Activated CD4-positive, alpha-beta T cell treated with anti-CD3 and anti-CD28 coated beads, Interleukin-2, amount 10 ng/mL, durations not matched to agents 24 days and 14 days (primary cell): ENCODE measurements at regions of chr6 and their contacts with region 1.

Region 1: DNA sequence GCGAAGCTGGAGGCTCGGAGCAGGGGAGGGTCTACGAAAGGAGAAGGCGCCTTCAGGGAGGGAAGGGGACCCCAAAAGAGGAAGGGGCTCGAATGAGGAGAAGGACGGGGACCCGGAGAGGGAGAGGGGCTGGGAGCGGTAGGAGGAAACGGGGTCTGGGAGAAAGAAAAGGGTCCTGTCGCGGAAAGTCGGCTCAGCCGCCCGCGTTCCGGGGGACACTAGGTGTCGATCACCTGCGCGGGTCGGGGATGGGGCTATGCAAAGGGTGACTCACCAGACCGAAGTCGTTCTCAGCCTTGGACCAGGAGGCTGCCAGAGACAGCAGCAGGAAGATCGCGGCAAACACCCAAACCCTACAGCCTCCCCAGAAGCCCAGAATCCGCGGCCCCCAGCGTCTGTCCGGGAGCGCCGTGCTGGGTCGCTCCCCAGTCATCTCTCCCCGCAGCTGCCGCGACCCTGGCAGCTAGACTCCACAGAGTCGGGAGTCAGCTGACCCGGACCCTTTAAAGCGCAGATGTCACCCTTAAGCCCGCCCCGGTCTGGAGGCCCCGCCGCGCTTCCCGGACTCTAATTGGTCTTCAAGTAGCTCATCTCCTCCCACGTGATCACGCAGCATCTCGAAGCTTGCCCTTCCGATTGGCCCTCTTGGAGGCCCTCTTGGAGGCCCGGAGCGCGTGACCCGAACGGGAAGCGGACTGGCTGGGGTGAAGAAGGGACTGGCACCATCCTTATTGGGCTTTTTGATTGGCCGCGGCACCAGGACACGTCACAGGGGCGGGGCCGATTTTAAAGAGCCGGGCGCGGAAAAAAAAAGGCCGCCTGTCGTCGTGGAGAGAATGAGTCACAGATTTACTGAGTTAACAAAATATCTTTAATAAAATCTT is at the start of gene NEU1:
- DNase-seq: peak; percentile 100
- H3K4me3 Mint-ChIP-seq: peak within 1 kb of the TSS; percentile 93
- H3K27ac Mint-ChIP-seq: peak within 1 kb of the TSS; percentile 91
- H3K4me1 Mint-ChIP-seq: peaks cover 21% of the 10 kb centered on the region
- H3K27me3 Mint-ChIP-seq: peaks cover 3% of the 10 kb centered on the region
- total RNA-seq, gene NEU1: 20.4 and 22.2 TPM in 2 replicates

Region 2: DNA sequence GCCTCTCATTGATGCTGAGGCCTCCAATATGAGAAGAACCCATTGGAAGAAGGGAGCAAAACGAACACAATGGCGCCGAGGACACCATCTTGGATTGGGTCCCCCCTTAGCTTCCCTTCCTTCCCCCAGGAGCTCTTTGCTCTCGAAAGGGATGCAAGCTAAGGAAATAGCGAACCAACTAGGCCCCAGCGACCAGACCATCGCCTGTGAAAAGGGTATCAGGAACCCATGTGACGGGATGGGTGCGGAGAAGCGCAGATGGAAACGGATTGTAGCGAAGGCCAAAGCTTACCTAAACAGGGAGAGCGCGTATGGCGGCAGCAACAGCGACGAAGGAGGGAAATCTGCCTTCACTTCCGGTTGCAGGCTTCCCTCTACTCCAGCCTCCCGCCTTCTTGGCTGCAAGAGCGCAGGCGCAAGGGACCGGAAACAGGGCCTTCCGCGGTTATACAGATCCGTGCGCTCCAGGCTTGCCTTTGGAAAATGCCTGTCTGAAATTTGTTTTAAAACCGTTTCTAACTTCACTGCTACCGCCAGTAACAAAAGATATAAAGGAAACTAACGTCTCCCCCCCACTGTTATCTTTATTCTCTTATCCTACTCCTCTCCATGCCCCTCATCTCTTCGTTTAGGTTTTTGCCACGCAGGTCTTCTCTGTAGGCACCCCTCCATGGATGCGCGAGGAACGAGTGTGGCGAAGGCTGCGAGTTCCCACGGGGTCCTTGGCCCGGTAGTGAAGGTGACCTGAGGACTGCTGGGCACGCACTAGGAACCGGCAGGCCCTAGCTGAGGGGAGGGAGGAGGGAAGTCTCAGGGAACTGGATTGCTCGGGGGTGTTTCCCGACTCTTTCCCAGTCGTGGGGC is 320.7 kb before region 1 on chr6 and contains the start of gene DDX39B:
- intact Hi-C with region 1: loop called (anchors 10 kb)
- DNase-seq: peak; percentile 98
- H3K4me3 Mint-ChIP-seq: peak within 1 kb of the TSS; percentile 81
- H3K27ac Mint-ChIP-seq: peak within 1 kb of the TSS; percentile 90
- H3K4me1 Mint-ChIP-seq: peaks cover 50% of the 10 kb centered on the region
- H3K27me3 Mint-ChIP-seq: no peaks in the 10 kb centered on the region
- total RNA-seq, gene DDX39B: 696 and 720 TPM in 2 replicates

Region 3: DNA sequence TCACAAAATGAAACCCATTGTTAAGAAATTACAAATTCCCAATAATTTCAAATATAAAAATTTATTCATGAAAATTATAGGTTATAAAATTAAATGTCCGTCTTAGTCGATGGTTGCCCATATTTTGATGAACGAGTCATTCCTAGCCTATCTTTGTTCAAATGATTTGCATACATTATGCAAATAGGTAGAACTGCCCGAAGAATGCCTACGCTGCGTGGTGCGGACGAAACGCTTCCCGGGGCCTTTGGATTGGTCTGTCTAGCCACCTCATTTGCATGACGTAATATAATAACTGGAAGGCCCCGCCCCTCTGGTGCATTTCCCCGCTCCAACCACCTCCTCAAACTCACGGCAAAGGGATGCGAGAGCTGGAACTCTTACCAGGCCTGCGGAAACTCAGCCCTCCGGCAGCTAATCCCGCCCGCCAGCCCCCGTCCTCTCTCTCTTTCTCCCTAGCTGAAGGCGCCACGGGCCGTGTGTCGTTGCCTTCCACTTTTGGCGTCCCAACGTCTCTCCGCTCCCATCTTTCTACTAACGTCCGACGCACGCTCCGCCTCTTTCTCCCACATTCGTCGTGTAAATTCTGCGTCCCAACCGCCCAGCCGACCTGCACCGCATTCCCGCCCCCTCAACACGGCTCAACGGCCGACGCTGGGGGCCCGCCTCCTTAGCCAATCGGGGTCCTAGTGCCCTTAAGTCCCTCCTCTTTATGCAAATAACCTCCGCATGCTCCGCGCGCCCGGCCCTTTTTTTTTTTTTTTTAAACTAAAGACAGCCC is 242.6 kb before region 1 on chr6:
- intact Hi-C with region 1: loop called (anchors 1 kb)
- DNase-seq: peak; percentile 99
- H3K4me3 Mint-ChIP-seq: peak overlapping the region; percentile 90
- H3K27ac Mint-ChIP-seq: peak overlapping the region; percentile 95
- H3K4me1 Mint-ChIP-seq: peaks cover 46% of the 10 kb centered on the region
- H3K27me3 Mint-ChIP-seq: no peaks in the 10 kb centered on the region

Region 4: GRCh38 chr6:31702819-31703522 is 159.6 kb before region 1 on chr6 and contains the start of gene ABHD16A:
- intact Hi-C with region 1: loop called (anchors 1 kb)
- DNase-seq: peak; percentile 99
- H3K4me3 Mint-ChIP-seq: peak within 1 kb of the TSS; percentile 98
- H3K27ac Mint-ChIP-seq: peak within 1 kb of the TSS; percentile 99
- H3K4me1 Mint-ChIP-seq: peaks cover 24% of the 10 kb centered on the region
- H3K27me3 Mint-ChIP-seq: no peaks in the 10 kb centered on the region
- total RNA-seq, gene ABHD16A: 43.1 and 44.7 TPM in 2 replicates

Region 5: DNA sequence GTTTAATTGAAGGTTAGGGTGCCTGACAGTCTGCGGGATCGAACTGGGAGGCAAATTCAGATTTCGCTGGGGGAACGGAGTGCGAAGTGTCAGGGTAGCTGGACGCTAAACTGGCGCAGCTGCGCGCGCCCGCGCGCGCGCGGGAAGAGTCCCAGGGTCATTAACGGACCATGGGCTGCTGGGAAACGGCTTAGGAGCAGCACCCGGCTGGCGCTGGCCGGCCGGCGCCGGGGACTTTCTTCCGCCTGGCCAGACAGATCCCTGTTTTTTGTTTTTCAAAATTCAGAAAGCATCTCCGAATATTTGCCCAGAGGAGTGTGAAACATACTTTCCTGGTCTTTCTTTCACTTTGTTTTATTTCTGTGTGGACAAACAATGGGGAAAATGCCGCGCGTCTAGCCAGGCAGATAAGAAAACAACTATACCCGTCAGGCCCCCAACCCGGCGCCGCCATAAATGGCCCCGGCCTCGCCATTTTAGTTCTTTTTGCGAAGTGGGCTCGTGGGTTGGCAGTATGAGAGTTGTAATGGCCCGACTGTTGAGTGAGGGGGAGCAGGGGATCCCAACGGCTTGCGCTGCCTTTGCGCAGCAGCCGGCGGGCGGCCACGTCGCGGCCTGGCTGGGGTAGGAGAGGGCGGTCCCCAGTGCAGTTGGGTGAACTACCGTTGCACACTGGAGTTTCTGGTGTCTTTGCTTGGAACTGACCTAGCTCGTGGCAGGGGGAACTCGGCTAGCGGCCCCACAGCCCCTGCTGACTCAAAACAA is 28.0 kb before region 1 on chr6:
- intact Hi-C with region 1: loop called (anchors 1 kb)
- DNase-seq: peak; percentile 93
- H3K4me3 Mint-ChIP-seq: peak overlapping the region; percentile 97
- H3K27ac Mint-ChIP-seq: peak overlapping the region; percentile 96
- H3K4me1 Mint-ChIP-seq: peaks cover 34% of the 10 kb centered on the region
- H3K27me3 Mint-ChIP-seq: no peaks in the 10 kb centered on the region

Region 6: GRCh38 chr6:31901953-31902643 is 39.5 kb after region 1 on chr6 and contains the start of gene ZBTB12:
- intact Hi-C with region 1: loop called (anchors 1 kb)
- DNase-seq: peak; percentile 96
- H3K4me3 Mint-ChIP-seq: peak within 1 kb of the TSS; percentile 91
- H3K27ac Mint-ChIP-seq: peak within 1 kb of the TSS; percentile 91
- H3K4me1 Mint-ChIP-seq: peaks cover 31% of the 10 kb centered on the region
- H3K27me3 Mint-ChIP-seq: peaks cover 6% of the 10 kb centered on the region
- total RNA-seq, gene ZBTB12: 3.7 and 4.6 TPM in 2 replicates